ENCODE measurements at regions of chr10 and their contacts with region 1.

Region 1: GRCh38 chr10:93074147-93074596 is 479 bp downstream of the CYP26A1 start:
- DNase-seq: no peak
- ATAC-seq: no peak
- H3K4me3 Mint-ChIP-seq: peak overlapping the region; percentile 71
- H3K27ac Mint-ChIP-seq: no peak overlapping the region
- H3K4me1 Mint-ChIP-seq: peaks cover 40% of the 10 kb centered on the region
- H3K27me3 Mint-ChIP-seq: peaks cover 68% of the 10 kb centered on the region
- CTCF ChIP-seq: no peak

Region 2: GRCh38 chr10:93062514-93063143 is 11.5 kb before region 1 on chr10:
- CTCF ChIA-PET with region 1: interaction called, 3 read pairs
- POLR2A ChIA-PET with region 1: no interaction called
- intact Hi-C with region 1: loop called (anchors 1 kb)
- DNase-seq: no peak
- ATAC-seq: peak; percentile 74
- H3K4me3 Mint-ChIP-seq: peak overlapping the region; percentile 70
- H3K27ac Mint-ChIP-seq: peak overlapping the region; percentile 24
- H3K4me1 Mint-ChIP-seq: peaks cover 38% of the 10 kb centered on the region
- H3K27me3 Mint-ChIP-seq: peaks cover 50% of the 10 kb centered on the region
- CTCF ChIP-seq: no peak

Measured in activated B cell treated with CpG ODN at 0.5 μM for 24 hours (primary cell).